ENCODE measurements at regions of chr13 and their contacts with region 1.

Region 1: DNA sequence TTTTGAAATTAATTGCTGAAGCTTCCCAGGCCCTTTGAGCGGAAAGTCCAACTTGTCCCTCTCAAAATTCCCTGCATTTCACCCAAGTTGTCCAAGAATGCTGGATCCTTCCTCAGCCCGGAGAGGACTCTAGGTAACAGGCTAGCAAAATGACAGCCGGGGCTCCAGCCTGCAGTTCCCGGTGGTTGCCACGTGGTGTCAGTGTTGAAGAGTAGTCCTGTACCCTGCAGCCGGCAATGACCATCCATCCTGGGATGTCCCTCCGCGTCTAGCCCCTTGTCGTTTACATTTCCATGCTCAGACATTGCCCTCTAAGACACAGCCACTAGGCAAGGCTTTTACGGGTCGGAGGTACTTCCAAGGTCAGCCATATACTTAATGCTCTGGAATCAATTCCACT is 31.4 kb upstream of the MTIF3 start:
- DNase-seq: no peak
- ATAC-seq: no peak
- H3K4me3 Mint-ChIP-seq: no peak overlapping the region
- H3K27ac Mint-ChIP-seq: peak overlapping the region; percentile 95
- H3K4me1 Mint-ChIP-seq: peaks cover 63% of the 10 kb centered on the region
- H3K27me3 Mint-ChIP-seq: no peaks in the 10 kb centered on the region
- CTCF ChIP-seq: no peak

Region 2: GRCh38 chr13:27455331-27455855 is 26.4 kb before region 1 on chr13:
- CTCF ChIA-PET with region 1: interaction called, 4 read pairs
- POLR2A ChIA-PET with region 1: interaction called, 124 read pairs
- intact Hi-C with region 1: loop called (anchors 1 kb)
- DNase-seq: no peak
- ATAC-seq: peak; percentile 41
- H3K4me3 Mint-ChIP-seq: peak overlapping the region; percentile 87
- H3K27ac Mint-ChIP-seq: peak overlapping the region; percentile 94
- H3K4me1 Mint-ChIP-seq: peaks cover 31% of the 10 kb centered on the region
- H3K27me3 Mint-ChIP-seq: no peaks in the 10 kb centered on the region
- CTCF ChIP-seq: no peak

Region 3: DNA sequence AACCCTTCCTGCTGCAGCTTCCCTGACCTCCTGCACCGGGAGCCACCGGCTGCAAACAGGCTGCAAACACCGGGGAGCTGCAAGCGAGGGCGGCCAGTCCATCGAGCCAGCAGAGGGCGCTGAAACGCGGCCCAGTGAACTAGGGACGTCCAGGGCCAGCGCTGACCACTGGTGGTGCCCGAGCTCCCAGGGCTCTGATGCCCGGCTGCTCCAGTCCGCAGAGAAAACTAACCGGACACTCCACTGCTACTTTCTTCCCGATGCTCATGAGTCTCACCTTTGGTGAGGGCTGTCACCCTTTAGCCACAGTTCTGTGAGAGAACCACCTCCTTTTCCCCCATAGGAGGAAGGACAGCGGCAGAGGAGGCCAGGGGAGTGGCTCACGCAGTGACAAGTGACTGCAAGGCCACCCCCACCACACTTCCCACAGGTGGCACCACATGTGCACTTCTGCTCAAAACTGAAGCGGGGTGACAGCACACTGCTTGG is 51.4 kb after region 1 on chr13:
- CTCF ChIA-PET with region 1: no interaction called
- POLR2A ChIA-PET with region 1: no interaction called
- intact Hi-C with region 1: loop called (anchors 1 kb)
- DNase-seq: peak; percentile 39
- ATAC-seq: peak; percentile 72
- H3K4me3 Mint-ChIP-seq: peak overlapping the region; percentile 36
- H3K27ac Mint-ChIP-seq: no peak overlapping the region
- H3K4me1 Mint-ChIP-seq: peaks cover 23% of the 10 kb centered on the region
- H3K27me3 Mint-ChIP-seq: no peaks in the 10 kb centered on the region
- CTCF ChIP-seq: peak; percentile 53

Region 4: GRCh38 chr13:27620377-27621115 is 138.8 kb after region 1 on chr13 and contains the start of gene LNX2:
- CTCF ChIA-PET with region 1: no interaction called
- POLR2A ChIA-PET with region 1: interaction called, 15 read pairs
- intact Hi-C with region 1: loop called (anchors 1 kb)
- DNase-seq: peak; percentile 97
- ATAC-seq: peak; percentile 87
- H3K4me3 Mint-ChIP-seq: peak within 1 kb of the TSS; percentile 93
- H3K27ac Mint-ChIP-seq: peak within 1 kb of the TSS; percentile 93
- H3K4me1 Mint-ChIP-seq: peaks cover 54% of the 10 kb centered on the region
- H3K27me3 Mint-ChIP-seq: no peaks in the 10 kb centered on the region
- CTCF ChIP-seq: no peak
- total RNA-seq, gene LNX2: 6.1 and 7.1 TPM in 2 replicates

Region 5: DNA sequence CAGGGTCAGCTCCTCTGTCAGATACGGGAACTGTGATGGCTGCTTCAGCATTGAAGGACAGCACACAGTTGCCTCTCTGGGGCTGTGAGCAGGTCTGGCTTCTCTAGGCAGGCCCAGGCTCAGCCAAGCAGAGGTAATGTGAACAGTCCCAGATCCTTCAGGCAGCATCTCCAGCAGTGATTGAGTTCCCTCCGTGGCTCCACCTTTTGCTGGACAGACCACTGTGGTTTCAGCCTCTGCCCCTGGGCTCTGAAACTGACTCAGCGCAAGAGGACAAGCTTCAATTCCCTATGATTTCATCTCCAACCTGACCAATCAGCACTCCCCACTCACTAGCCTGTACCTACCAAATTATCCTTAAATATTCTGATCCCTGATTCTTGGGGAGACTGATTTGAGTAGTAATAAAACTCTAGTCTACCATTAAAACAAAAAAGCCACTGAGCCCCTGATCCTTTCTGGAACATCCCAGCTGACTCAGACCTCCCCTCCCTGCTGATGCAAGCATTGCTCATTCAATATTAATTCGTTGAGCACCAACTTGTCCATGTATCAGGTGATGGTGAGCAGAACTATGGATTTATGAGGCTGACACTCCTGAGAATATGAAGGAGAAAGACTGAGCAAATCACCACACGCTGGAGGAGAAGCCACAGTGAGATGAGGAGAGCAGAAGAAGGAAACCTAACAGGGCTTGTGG is 327.2 kb after region 1 on chr13:
- CTCF ChIA-PET with region 1: no interaction called
- POLR2A ChIA-PET with region 1: interaction called, 10 read pairs
- intact Hi-C with region 1: no loop called
- DNase-seq: no peak
- ATAC-seq: no peak
- H3K4me3 Mint-ChIP-seq: no peak overlapping the region
- H3K27ac Mint-ChIP-seq: no peak overlapping the region
- H3K4me1 Mint-ChIP-seq: no peaks in the 10 kb centered on the region
- H3K27me3 Mint-ChIP-seq: peaks cover 39% of the 10 kb centered on the region
- CTCF ChIP-seq: no peak

Measured in activated B cell treated with CpG ODN at 0.5 μM for 24 hours (primary cell).